Naive thymus-derived CD4-positive, alpha-beta T cell (primary cell): ENCODE measurements at regions of chr18 and their contacts with region 1.

Region 1: DNA sequence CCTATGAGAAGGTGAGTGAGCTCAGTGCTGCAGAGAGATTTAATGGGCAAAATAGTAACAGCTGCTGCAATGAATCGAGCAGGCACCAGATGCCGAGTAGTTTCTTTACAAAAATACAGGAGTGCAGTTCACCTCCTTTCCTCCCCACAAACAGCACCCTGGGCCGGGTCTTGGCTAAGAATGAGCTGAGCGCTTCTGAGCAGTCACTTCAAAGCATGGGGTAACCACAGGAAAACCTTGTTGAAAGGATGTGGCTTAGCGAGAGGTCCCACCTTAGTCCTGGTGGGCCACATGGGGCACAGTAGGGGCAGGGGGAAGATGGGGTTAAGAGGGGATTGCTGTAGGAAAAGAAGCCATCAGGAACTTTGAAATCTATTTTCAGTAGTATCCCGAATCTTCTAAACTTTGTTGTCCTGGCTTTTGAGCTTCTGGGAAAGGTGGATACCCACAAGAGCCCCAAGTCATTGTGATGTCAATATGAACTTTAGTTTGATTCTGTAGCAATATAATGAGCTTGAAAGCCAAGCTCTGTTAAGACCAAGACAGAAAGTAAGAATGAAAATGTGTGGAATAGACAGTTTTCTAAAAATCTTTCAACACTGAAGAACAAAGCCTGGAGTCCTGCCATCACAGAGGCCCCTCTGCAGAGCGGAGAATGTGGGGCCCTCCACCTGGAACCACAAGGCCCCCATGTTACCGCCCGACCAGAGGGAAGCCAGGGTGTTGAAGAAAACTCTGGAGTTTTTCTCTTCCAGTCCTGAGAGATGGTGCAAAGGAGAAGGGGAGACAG is 101.0 kb upstream of the ZNF236 start:
- DNase-seq: peak; percentile 29 to 89 (median 84)
- ATAC-seq: peak; percentile 95
- H3K4me3 ChIP-seq: peak overlapping the region; percentile 43
- H3K4me3 Mint-ChIP-seq: peak overlapping the region; percentile 78 to 94 (median 85)
- H3K27ac ChIP-seq: no peak overlapping the region
- H3K27ac Mint-ChIP-seq: peak overlapping the region; percentile 16 to 89 (median 84)
- H3K4me1 ChIP-seq: peaks cover 41 to 45% of the 10 kb centered on the region in 2 donors
- H3K4me1 Mint-ChIP-seq: peaks cover 34 to 62% (median 50%) of the 10 kb centered on the region in 7 donors
- H3K27me3 ChIP-seq: no peaks in the 10 kb centered on the region
- H3K27me3 Mint-ChIP-seq: peaks cover 0 to 30% (median 0%) of the 10 kb centered on the region in 5 donors

Region 2: DNA sequence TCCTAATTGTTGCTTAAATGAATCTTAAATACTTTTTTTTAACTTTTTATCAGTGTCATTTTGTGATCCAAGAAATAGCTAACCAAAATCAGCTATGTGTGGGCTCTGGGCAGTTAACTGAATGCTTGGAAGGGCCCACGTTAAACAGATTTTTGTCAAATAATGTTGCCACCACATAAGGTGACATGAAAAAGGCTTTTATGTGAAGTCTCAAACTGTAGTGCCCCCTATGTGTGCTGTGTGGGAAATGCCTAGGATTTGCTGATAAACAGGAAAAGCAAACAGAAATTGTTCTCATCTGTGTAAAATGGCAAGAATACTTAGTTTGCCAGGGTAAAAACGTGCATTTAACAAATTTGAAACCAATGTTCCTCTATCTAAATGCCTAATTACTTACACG is 468.5 kb before region 1 on chr18:
- CTCF ChIA-PET with region 1: no interaction called
- POLR2A ChIA-PET with region 1: no interaction called
- intact Hi-C with region 1: no loop called
- DNase-seq: no peak
- ATAC-seq: no peak
- H3K4me3 ChIP-seq: no peak overlapping the region
- H3K4me3 Mint-ChIP-seq: no peak overlapping the region
- H3K27ac ChIP-seq: no peak overlapping the region
- H3K27ac Mint-ChIP-seq: no peak overlapping the region
- H3K4me1 ChIP-seq: no peaks in the 10 kb centered on the region
- H3K4me1 Mint-ChIP-seq: no peaks in the 10 kb centered on the region
- H3K27me3 ChIP-seq: no peaks in the 10 kb centered on the region
- H3K27me3 Mint-ChIP-seq: peaks cover 9 to 17% (median 10%) of the 10 kb centered on the region in 5 donors

Region 3: DNA sequence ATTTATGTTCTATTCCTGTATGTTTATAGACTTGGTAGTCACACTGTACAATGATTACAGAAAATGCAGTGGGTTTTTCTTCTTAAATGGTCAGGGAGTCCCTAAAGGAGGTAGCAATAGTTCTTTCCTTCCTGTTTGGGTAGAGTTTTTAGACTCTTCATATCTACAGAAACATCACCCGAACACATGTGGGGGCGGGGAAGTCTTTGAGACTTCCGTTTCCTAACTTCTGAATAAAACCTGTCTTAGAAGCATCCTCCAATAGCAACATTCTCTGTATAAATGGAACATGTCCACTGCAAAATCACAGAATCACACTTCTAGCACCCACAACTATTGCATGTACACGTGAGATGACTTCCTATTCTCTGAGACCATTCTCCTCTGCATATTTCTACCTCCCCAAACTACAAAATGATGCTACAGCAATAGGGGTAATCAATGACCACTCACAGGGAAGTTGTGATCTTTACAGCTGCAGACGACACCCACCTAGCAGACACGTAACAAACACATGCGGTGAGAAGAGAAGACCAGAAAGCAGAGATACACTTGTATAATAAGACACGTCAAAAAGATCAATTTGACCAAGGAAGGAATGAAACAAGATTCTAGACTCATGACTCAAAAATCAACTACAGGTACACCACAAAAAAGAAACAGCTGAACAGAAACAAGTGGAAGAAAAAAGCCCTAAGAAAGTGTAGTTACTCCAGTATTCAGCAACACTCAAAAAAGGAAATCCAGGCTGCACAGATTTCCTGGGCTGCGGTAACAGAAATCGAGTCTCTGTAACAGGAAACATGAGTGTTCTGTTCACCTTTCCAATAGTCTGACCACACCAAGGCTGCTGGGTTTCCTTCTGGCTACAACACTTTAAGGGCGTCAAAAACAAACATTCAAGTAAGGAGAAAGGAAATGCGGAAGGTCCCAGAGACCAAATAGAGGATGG is 346.8 kb before region 1 on chr18:
- CTCF ChIA-PET with region 1: no interaction called
- POLR2A ChIA-PET with region 1: no interaction called
- intact Hi-C with region 1: loop called in 1 of 2 experiments (anchors 1 kb)
- DNase-seq: peak in 8 of 9 donors; percentile 42 to 65 (median 55)
- ATAC-seq: peak; percentile 60
- H3K4me3 ChIP-seq: peak overlapping the region; percentile 19
- H3K4me3 Mint-ChIP-seq: peak overlapping the region; percentile 51 to 79 (median 70)
- H3K27ac ChIP-seq: peak overlapping the region; percentile 41
- H3K27ac Mint-ChIP-seq: peak overlapping the region; percentile 46 to 95 (median 85)
- H3K4me1 ChIP-seq: peaks cover 17 to 47% of the 10 kb centered on the region in 2 donors
- H3K4me1 Mint-ChIP-seq: peaks cover 42 to 62% (median 52%) of the 10 kb centered on the region in 7 donors
- H3K27me3 ChIP-seq: no peaks in the 10 kb centered on the region
- H3K27me3 Mint-ChIP-seq: peaks cover 0 to 8% (median 0%) of the 10 kb centered on the region in 5 donors

Region 4: GRCh38 chr18:76709659-76710645 is 11.4 kb before region 1 on chr18:
- CTCF ChIA-PET with region 1: interaction called, 18 read pairs
- POLR2A ChIA-PET with region 1: no interaction called
- intact Hi-C with region 1: loop called (anchors 1 kb)
- DNase-seq: peak; percentile 23 to 66 (median 54)
- ATAC-seq: peak; percentile 93
- H3K4me3 ChIP-seq: no peak overlapping the region
- H3K4me3 Mint-ChIP-seq: peak overlapping the region in 2 of 10 donors; percentile 10 to 36
- H3K27ac ChIP-seq: no peak overlapping the region
- H3K27ac Mint-ChIP-seq: peak overlapping the region in 1 of 9 donors; percentile 25
- H3K4me1 ChIP-seq: no peaks in the 10 kb centered on the region
- H3K4me1 Mint-ChIP-seq: peaks cover 3 to 15% (median 6%) of the 10 kb centered on the region in 7 donors
- H3K27me3 ChIP-seq: no peaks in the 10 kb centered on the region
- H3K27me3 Mint-ChIP-seq: peaks cover 0 to 22% (median 0%) of the 10 kb centered on the region in 5 donors

Region 5: GRCh38 chr18:76788571-76789317 is 67.3 kb after region 1 on chr18:
- CTCF ChIA-PET with region 1: no interaction called
- POLR2A ChIA-PET with region 1: no interaction called
- intact Hi-C with region 1: loop called in 1 of 2 experiments (anchors 5 kb)
- DNase-seq: no peak
- ATAC-seq: no peak
- H3K4me3 ChIP-seq: no peak overlapping the region
- H3K4me3 Mint-ChIP-seq: no peak overlapping the region
- H3K27ac ChIP-seq: no peak overlapping the region
- H3K27ac Mint-ChIP-seq: no peak overlapping the region
- H3K4me1 ChIP-seq: no peaks in the 10 kb centered on the region
- H3K4me1 Mint-ChIP-seq: peaks cover 0 to 10% (median 5%) of the 10 kb centered on the region in 7 donors
- H3K27me3 ChIP-seq: no peaks in the 10 kb centered on the region
- H3K27me3 Mint-ChIP-seq: peaks cover 0 to 29% (median 0%) of the 10 kb centered on the region in 5 donors

Region 6: GRCh38 chr18:76822510-76823160 is 101.2 kb after region 1 on chr18 and contains the start of gene ZNF236:
- CTCF ChIA-PET with region 1: no interaction called
- POLR2A ChIA-PET with region 1: interaction called, 4 read pairs
- intact Hi-C with region 1: loop called (anchors 5 kb)
- DNase-seq: peak; percentile 38 to 78 (median 61)
- ATAC-seq: peak; percentile 76
- H3K4me3 ChIP-seq: peak within 1 kb of the TSS; percentile 99
- H3K4me3 Mint-ChIP-seq: peak within 1 kb of the TSS; percentile 88 to 96 (median 93)
- H3K27ac ChIP-seq: peak within 1 kb of the TSS; percentile 84
- H3K27ac Mint-ChIP-seq: peak within 1 kb of the TSS; percentile 89 to 97 (median 96)
- H3K4me1 ChIP-seq: peaks cover 8 to 10% of the 10 kb centered on the region in 2 donors
- H3K4me1 Mint-ChIP-seq: peaks cover 38 to 65% (median 56%) of the 10 kb centered on the region in 7 donors
- H3K27me3 ChIP-seq: no peaks in the 10 kb centered on the region
- H3K27me3 Mint-ChIP-seq: no peaks in the 10 kb centered on the region
- total RNA-seq, gene ZNF236: 25.9 to 34.5 (median 30.6) TPM